ENCODE measurements at regions of chr5 and their contacts with region 1.

Region 1: GRCh38 chr5:14685757-14686156 is 21.2 kb downstream of the OTULIN start:
- H3K4me3 ChIP-seq: no peak overlapping the region
- H3K27ac ChIP-seq: no peak overlapping the region
- H3K4me1 ChIP-seq: no peaks in the 10 kb centered on the region
- CTCF ChIP-seq: peak; percentile 49; the same call in 1 of the 2 replicates

Region 2: DNA sequence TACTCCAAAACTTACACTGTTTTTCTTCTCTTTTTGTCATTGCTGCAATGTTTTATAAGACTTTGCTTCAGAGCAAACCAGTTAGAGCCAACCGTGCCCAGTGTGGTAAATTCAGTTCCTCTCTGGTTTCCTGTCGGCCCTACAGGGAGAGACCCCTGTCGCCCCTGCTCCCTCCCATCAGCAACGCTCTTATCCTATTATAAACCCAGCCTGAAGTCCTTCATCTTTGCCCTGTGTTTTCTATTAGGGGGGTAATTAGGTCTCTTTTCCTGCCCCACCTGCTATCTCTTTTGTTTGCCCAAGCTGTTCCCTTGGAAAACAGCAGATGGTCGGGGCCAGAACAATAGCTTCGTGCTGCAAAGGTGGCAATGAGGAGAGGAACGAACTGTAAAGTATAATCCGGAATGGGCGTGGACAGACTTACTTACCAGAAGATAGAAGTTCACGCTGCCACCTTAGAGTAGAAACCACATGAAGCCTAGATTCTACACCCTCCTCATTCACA is 125.6 kb before region 1 on chr5:
- CTCF ChIA-PET with region 1: no interaction called
- POLR2A ChIA-PET with region 1: no interaction called
- H3K4me3 ChIP-seq: no peak overlapping the region
- H3K27ac ChIP-seq: no peak overlapping the region
- H3K4me1 ChIP-seq: no peaks in the 10 kb centered on the region
- CTCF ChIP-seq: no peak

Region 3: GRCh38 chr5:14659821-14660607 is 25.7 kb before region 1 on chr5:
- CTCF ChIA-PET with region 1: no interaction called
- POLR2A ChIA-PET with region 1: no interaction called
- H3K4me3 ChIP-seq: no peak overlapping the region
- H3K27ac ChIP-seq: no peak overlapping the region
- H3K4me1 ChIP-seq: peaks cover 3% of the 10 kb centered on the region; the same call in 1 of the 2 replicates
- CTCF ChIP-seq: no peak

Region 4: DNA sequence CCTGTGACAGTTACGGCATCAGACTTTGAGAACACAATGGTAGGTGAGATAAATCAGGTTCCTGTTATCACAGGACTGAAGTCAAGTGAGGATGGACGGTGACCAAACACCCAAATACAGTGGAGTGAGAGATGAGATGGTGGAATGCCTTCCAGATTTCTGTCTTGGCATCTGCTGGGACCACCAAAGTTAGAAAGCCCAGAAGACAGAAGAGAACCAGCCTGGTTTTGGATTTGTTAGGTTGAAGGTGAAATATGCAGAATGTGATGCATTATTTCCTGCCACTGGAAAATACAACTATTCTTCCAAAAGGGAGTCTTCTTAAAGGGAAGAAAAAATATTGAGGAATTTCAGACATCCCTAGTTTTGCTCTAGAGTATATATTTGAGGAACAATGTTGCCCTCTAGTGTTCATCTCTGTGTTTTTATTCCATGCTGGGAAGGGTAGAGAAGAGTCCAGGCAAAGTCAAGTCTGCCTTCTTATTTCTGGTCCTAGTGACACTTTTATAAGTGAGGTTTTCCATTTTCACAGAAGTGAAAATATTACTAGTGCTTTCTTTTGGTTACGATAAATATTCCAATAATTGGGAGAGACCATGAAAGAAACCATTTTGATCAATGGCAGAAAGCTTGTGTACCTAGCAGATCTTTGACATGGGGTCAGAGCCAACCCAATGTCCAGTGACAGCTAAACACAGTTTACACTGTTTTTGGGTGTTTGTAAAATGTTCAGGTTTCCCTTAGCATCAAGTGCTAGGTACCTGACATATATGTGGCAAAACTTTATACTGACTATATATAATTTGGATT is 328.1 kb after region 1 on chr5:
- CTCF ChIA-PET with region 1: interaction called, 30 read pairs
- POLR2A ChIA-PET with region 1: no interaction called
- H3K4me3 ChIP-seq: no peak overlapping the region
- H3K27ac ChIP-seq: no peak overlapping the region
- H3K4me1 ChIP-seq: peaks cover 14% of the 10 kb centered on the region
- CTCF ChIP-seq: no peak